Esophagus squamous epithelium (tissue), 5 donors: ENCODE measurements at regions of chr7 and their contacts with region 1.

Region 1: GRCh38 chr7:32221736-32222135 is 151.5 kb upstream of the PDE1C start:
- DNase-seq: no peak
- H3K4me3 ChIP-seq: no peak overlapping the region
- H3K27ac ChIP-seq: no peak overlapping the region
- H3K4me1 ChIP-seq: no peaks in the 10 kb centered on the region
- H3K27me3 ChIP-seq: no peaks in the 10 kb centered on the region
- CTCF ChIP-seq: no peak
- POLR2A ChIP-seq: no peak

Region 2: DNA sequence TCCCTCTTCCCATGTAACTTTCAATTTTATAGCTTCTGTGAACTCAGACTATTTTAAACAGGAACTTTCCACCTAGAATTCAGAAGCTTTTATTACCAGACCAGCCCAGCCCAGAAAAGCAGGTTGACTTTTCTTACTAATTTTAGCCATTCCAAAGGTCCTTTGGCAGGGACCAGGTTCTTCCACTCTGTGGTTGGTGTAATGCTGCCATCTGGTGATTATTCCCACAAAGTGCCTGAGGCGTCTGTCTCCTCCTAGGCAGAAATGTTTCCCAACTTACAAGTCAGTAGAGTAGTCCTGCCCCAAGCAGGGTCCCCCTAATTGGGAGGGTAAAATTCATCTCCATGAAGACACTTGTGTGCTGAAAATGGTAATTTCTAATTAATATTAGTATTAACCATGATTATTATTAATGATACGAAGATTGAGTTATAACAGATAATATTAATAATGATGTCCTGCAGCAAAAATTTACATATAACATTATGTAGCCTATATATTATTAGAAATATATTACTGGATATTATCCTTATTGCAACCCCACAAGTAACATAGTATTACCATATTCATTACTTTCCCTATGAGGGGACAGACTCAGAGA is 587.7 kb before region 1 on chr7:
- intact Hi-C with region 1: no loop called
- DNase-seq: no peak
- H3K4me3 ChIP-seq: no peak overlapping the region
- H3K27ac ChIP-seq: no peak overlapping the region
- H3K4me1 ChIP-seq: no peaks in the 10 kb centered on the region
- H3K27me3 ChIP-seq: no peaks in the 10 kb centered on the region
- CTCF ChIP-seq: peak in 5 of 6 experiments; percentile 27 to 68 (median 52)
- POLR2A ChIP-seq: no peak

Region 3: GRCh38 chr7:32479574-32480200 is 258.0 kb after region 1 on chr7:
- intact Hi-C with region 1: loop called (anchors 10 kb)
- DNase-seq: no peak
- H3K4me3 ChIP-seq: no peak overlapping the region
- H3K27ac ChIP-seq: no peak overlapping the region
- H3K4me1 ChIP-seq: no peaks in the 10 kb centered on the region
- H3K27me3 ChIP-seq: no peaks in the 10 kb centered on the region
- CTCF ChIP-seq: peak in 5 of 6 experiments; percentile 37 to 82 (median 46)
- POLR2A ChIP-seq: no peak

Region 4: GRCh38 chr7:32583791-32584190 is 362.1 kb after region 1 on chr7:
- intact Hi-C with region 1: no loop called
- DNase-seq: no peak
- H3K4me3 ChIP-seq: no peak overlapping the region
- H3K27ac ChIP-seq: no peak overlapping the region
- H3K4me1 ChIP-seq: peaks cover 0 to 21% (median 9%) of the 10 kb centered on the region in 3 donors
- H3K27me3 ChIP-seq: no peaks in the 10 kb centered on the region
- CTCF ChIP-seq: no peak
- POLR2A ChIP-seq: no peak